Left cardiac atrium (tissue), 4 donors: ENCODE measurements at regions of chr7 and their contacts with region 1.

Region 1: DNA sequence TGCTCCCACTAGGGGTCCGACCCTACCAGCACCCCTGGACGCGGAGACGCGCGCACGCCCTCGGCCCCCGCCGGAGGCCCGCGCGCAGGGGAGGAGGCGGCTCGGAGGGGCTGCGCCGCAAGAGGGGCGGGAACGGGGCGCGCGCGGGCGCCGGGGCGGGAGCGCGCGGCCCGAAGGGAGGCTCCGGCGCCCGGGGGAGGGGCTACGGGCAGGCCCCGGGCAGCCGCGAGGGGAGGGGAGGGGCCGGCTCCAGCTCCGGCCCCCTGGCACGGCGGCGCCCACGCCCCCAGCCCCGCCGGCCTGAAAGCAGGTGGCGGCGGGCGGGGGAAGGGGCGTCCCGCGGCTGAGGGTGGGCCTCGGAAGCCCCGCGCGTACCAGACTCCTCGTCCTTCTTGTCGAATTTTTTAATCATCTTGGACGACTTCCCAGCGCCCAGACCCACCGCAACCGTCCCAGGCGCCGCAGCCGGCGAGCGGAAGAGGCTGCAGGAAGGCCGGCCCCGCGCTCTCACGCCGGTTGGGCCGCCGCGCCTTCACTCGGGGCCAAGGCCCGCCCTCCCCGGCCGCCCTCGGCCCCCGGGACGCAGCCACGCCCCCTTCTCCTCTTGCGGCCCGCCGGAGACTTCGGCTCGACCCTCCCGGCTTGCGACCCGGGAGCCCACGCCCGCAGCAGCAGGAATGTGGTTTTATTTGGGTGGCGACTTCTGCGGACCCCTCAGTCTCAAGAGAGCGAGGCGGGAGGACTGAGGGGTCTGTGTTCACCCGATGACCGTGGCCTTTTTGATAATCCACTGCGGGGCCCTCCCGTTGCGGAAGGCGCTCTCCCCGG is at the start of gene COPG2:
- DNase-seq: peak; percentile 89
- ATAC-seq: peak; percentile 99 to 100
- total RNA-seq, gene COPG2: 17.9 to 18.4 TPM

Region 2: DNA sequence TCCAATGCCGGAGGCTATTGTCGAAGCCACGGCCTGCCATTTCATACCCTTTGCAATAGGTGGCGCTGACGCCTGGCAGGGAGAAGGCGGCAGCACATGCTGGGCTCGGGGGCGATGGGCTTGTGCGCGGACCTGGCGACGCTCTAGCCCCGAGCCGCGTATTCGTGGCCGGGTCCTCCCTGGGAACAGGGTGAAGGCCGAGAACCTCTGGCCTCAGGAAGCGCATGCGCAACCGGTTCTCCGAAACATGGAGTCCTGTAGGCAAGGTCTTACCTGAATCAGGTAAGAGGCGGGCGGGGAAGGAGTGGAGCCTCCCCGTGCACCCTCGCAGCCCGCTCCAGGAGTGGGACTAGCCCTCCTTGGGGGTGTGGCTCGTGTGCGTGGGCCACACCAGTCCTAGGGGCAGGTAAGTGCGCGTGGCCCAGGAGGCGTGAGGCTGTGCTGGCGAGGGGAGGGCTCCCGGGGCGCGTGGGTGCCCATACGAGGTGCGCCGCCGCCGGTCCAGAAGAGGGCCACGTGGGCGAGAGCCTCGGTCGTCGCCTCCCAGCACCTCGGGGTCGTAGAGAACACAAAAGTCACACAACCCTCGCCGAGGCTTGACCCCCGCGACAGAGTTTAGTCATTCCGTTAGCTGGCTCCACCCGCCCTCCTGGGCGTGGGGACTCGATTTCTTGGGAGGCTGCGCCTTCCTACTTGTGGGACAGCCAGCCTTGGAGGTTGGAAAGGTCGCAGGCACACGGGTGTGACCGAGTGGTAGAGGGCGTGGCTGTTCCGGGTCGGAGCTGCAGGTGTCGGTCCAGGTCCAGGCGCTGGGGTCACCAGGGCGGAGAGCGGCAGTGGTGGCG is 182.1 kb before region 1 on chr7:
- intact Hi-C with region 1: loop called in 1 of 2 experiments (anchors 10 kb)
- DNase-seq: peak; percentile 66
- ATAC-seq: peak; percentile 53 to 68

Region 3: GRCh38 chr7:130553398-130554029 is 115.0 kb before region 1 on chr7:
- intact Hi-C with region 1: loop called in 1 of 2 experiments (anchors 10 kb)
- DNase-seq: no peak
- ATAC-seq: no peak